Ascending aorta (tissue), 2 donors: ENCODE measurements at regions of chr1 and their contacts with region 1.

Region 1: DNA sequence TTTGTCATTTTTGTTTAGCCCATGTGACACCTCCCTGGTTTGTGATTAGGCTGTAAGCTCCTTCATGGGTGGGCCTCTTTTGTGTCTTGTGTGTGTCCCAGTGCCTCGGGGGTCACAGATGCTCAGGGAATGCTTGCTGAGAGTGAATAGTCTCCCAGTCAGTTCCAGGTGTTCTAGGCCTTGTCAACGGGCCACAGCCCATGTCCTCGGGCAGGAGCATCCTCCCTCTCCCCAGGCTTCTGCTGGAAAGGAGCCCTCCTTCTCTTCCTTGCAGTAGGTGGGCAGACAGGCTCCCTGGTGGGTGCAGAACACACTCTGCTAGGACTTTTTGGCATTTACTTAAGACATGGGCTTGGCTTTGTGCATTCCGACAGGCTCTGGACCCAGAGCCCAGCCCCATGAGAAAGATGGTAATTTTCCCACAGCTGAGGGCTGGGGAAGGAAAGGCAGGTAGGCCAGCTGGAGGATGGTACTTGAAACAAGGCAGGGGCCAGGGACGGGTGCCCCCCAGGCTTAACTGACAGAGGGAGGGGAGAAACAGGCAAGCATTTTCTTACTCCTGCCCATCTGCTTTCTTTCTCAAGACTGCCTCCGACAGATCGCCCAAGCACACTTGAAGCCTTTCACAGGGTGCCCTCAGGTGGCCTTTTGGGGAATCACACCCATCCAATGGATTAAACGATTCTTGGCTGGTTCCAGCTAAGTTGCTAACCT is 7.1 kb upstream of the CPLANE2 start:
- DNase-seq: peak in 1 of 2 donors; percentile 91
- H3K4me3 ChIP-seq: no peak overlapping the region
- H3K27ac ChIP-seq: peak overlapping the region; percentile 47 to 66
- H3K4me1 ChIP-seq: peaks cover 18 to 46% of the 10 kb centered on the region in 2 donors
- H3K27me3 ChIP-seq: no peaks in the 10 kb centered on the region
- CTCF ChIP-seq: peak; percentile 81 to 84 (median 84)

Region 2: GRCh38 chr1:16026723-16027484 is 217.2 kb before region 1 on chr1:
- intact Hi-C with region 1: no loop called
- DNase-seq: no peak
- H3K4me3 ChIP-seq: peak overlapping the region; percentile 3 to 46
- H3K27ac ChIP-seq: peak overlapping the region in 1 of 2 donors; percentile 35
- H3K4me1 ChIP-seq: peaks cover 8 to 9% of the 10 kb centered on the region in 2 donors
- H3K27me3 ChIP-seq: no peaks in the 10 kb centered on the region
- CTCF ChIP-seq: no peak

Region 3: GRCh38 chr1:16055613-16056520 is 188.2 kb before region 1 on chr1:
- intact Hi-C with region 1: no loop called
- DNase-seq: peak; percentile 28 to 92
- H3K4me3 ChIP-seq: no peak overlapping the region
- H3K27ac ChIP-seq: no peak overlapping the region
- H3K4me1 ChIP-seq: no peaks in the 10 kb centered on the region
- H3K27me3 ChIP-seq: no peaks in the 10 kb centered on the region
- CTCF ChIP-seq: peak; percentile 93 to 94 (median 94)

Region 4: DNA sequence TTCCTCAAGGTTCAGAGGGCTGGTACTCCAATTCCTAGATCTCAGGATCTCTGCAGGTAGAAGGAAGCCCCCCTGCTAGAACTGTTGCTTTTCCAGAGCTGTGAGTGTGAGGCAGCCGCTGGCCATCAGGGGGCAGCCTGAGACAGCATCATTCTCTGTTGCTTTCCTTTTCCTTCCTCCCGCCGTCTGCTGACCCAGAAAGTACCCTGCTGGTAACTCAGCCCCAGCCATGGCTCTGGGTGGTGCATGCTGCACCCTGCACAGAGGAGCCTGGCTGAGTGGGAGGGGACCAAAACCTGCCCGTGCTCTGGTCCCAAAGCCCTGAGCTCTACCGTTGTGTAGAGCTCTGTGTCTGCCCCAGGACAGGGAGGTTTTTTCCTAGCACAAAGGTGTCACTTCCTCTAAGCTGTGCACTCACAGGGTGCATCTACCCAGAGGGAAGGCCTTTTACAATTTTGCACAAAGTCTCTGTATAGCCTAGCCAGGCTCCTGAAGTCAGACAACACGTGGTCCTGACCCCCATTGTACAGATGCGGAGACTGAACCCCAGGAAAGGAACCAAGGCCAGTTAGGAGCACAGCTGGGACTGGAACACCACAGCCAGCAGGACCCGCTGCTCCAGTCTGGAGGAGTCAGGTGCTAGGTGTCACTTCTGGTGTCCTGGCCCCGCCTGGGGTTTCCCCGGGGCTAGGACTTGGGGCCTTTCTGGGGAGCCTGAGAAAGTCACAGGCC is 165.0 kb before region 1 on chr1:
- intact Hi-C with region 1: loop called (anchors 2 kb)
- DNase-seq: peak in 1 of 2 donors; percentile 90
- H3K4me3 ChIP-seq: no peak overlapping the region
- H3K27ac ChIP-seq: peak overlapping the region in 1 of 2 donors; percentile 19
- H3K4me1 ChIP-seq: peaks cover 8 to 15% of the 10 kb centered on the region in 2 donors
- H3K27me3 ChIP-seq: no peaks in the 10 kb centered on the region
- CTCF ChIP-seq: peak; percentile 88 to 97 (median 92)

Region 5: DNA sequence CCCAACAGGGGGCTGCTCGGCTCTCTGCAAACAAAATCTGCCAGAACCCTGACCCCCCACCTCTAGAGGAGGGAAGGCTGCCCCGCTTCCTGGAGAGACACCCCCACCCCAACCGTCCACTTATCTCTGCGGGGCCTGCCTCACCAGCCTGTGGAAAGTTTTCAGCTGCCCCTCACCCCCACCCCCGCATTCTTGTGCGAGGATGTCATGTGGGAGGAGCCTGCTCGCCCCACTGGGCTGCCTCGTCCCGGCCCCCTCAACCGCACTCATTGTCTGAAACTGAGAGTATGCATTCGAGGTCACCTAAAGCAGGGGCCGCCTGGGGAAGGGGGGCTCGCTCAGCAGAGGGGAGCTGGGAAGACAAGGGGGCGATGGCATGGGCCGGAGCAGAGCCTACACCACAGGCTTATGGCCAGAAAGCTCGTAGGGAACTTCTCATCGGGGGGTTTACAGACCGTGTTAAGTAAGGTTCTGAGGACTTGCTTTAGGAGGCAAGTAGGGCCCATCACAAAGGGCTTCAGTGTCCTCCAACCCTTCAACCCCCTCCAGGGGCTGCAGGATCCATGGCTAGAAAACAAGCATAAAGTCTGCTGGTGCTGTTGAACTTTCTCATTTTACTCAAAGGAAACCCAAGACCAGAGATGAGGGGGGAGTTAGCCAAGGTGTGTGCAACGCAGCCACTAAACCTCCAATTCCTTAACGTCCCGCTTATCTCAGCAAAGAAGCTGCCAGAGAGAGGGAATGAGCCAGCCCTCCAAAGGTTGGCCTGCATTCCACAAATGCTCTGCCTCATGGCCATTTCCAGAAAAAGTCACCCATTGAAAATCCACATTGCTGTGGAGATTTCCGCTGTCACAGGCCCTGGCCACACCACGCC is 97.6 kb before region 1 on chr1:
- intact Hi-C with region 1: loop called (anchors 2 kb)
- DNase-seq: peak in 1 of 2 donors; percentile 89
- H3K4me3 ChIP-seq: peak overlapping the region; percentile 46 to 59
- H3K27ac ChIP-seq: peak overlapping the region; percentile 84 to 94
- H3K4me1 ChIP-seq: peaks cover 13 to 53% of the 10 kb centered on the region in 2 donors
- H3K27me3 ChIP-seq: no peaks in the 10 kb centered on the region
- CTCF ChIP-seq: no peak

Region 6: GRCh38 chr1:16187748-16188401 is 56.2 kb before region 1 on chr1:
- intact Hi-C with region 1: loop called (anchors 5 kb)
- DNase-seq: peak in 1 of 2 donors; percentile 89
- H3K4me3 ChIP-seq: no peak overlapping the region
- H3K27ac ChIP-seq: no peak overlapping the region
- H3K4me1 ChIP-seq: peaks cover 6 to 20% of the 10 kb centered on the region in 2 donors
- H3K27me3 ChIP-seq: no peaks in the 10 kb centered on the region
- CTCF ChIP-seq: peak; percentile 90 to 99 (median 98)

Region 7: GRCh38 chr1:16351994-16352841 is 108.1 kb after region 1 on chr1 and contains the start of gene FBXO42:
- intact Hi-C with region 1: loop called (anchors 2 kb)
- DNase-seq: peak; percentile 61 to 96
- H3K4me3 ChIP-seq: peak within 1 kb of the TSS; percentile 95
- H3K27ac ChIP-seq: peak within 1 kb of the TSS; percentile 96 to 98
- H3K4me1 ChIP-seq: peaks cover 8 to 32% of the 10 kb centered on the region in 2 donors
- H3K27me3 ChIP-seq: no peaks in the 10 kb centered on the region
- CTCF ChIP-seq: peak; percentile 28 to 54 (median 34)
- total RNA-seq, gene FBXO42: 36.6 TPM

Region 8: GRCh38 chr1:16420424-16421118 is 176.5 kb after region 1 on chr1:
- intact Hi-C with region 1: no loop called
- DNase-seq: no peak
- H3K4me3 ChIP-seq: no peak overlapping the region
- H3K27ac ChIP-seq: no peak overlapping the region
- H3K4me1 ChIP-seq: no peaks in the 10 kb centered on the region
- H3K27me3 ChIP-seq: no peaks in the 10 kb centered on the region
- CTCF ChIP-seq: no peak